Activated CD4-positive, alpha-beta memory T cell treated with anti-CD3 and anti-CD28 coated beads, Interleukin-2, amount 10 ng/mL, durations not matched to agents 7 days and 5 days (primary cell): ENCODE measurements at regions of chr12 and their contacts with region 1.

Region 1: GRCh38 chr12:111812881-111813741 is 28.9 kb upstream of the MAPKAPK5 start:
- DNase-seq: peak; percentile 70
- H3K4me3 Mint-ChIP-seq: no peak overlapping the region
- H3K27ac Mint-ChIP-seq: no peak overlapping the region
- H3K4me1 Mint-ChIP-seq: peaks cover 11% of the 10 kb centered on the region
- H3K27me3 Mint-ChIP-seq: peaks cover 9% of the 10 kb centered on the region

Region 2: DNA sequence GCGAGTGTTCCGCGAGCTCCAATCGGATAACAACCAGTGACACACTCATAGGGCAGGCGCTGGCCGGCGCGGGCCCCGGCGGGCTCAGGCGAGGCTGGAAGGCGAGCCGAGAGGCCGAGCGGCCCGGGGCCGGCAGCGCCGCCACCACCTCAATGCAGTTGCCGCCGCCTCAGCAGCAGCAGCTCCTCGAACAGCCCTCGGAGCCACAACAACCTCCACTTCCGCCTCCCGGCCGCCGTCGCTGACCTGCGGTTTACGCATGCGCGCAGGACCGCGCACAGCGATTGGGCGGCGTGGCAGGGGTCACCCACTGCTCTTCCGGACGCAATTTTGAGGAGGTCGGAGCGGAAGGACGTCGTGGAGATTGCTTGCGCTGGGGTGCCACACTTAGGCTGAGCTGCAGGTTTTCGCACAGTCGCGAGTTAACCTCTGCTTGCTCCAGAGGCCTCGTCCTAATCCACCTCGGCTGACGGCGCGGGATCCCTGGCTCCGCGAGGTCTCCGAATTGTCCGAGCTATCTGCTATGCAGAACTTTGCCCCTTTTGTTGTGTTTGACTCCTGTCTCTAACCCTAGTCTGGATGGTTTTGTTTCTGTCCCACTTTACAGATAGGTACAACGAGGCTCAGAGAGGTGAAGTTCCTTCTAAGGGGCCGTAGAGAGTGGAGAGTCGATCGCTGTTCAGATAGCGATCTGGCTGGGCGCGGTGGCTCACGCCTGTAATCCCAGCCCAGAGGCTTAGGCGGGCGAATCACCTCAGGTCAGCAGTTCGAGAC is 127.2 kb before region 1 on chr12 and contains the starts of genes ACAD10 and BRAP:
- CTCF ChIA-PET with region 1: interaction called, 15 read pairs
- POLR2A ChIA-PET with region 1: interaction called, 6 read pairs
- DNase-seq: peak; percentile 95
- H3K4me3 Mint-ChIP-seq: peak within 1 kb of the TSS; percentile 99
- H3K27ac Mint-ChIP-seq: peak within 1 kb of the TSS; percentile 93
- H3K4me1 Mint-ChIP-seq: peaks cover 36% of the 10 kb centered on the region
- H3K27me3 Mint-ChIP-seq: no peaks in the 10 kb centered on the region
- total RNA-seq, gene ACAD10: 25.3 to 28.5 TPM
- total RNA-seq, gene BRAP: 18.1 to 19.4 TPM

Region 3: GRCh38 chr12:111692575-111693210 is 120.4 kb before region 1 on chr12:
- CTCF ChIA-PET with region 1: interaction called, 11 read pairs
- POLR2A ChIA-PET with region 1: no interaction called
- DNase-seq: no peak
- H3K4me3 Mint-ChIP-seq: no peak overlapping the region
- H3K27ac Mint-ChIP-seq: no peak overlapping the region
- H3K4me1 Mint-ChIP-seq: peaks cover 6% of the 10 kb centered on the region
- H3K27me3 Mint-ChIP-seq: no peaks in the 10 kb centered on the region

Region 4: GRCh38 chr12:111753144-111753881 is 59.8 kb before region 1 on chr12:
- CTCF ChIA-PET with region 1: interaction called, 18 read pairs
- POLR2A ChIA-PET with region 1: no interaction called
- DNase-seq: no peak
- H3K4me3 Mint-ChIP-seq: no peak overlapping the region
- H3K27ac Mint-ChIP-seq: no peak overlapping the region
- H3K4me1 Mint-ChIP-seq: peaks cover 12% of the 10 kb centered on the region
- H3K27me3 Mint-ChIP-seq: no peaks in the 10 kb centered on the region

Region 5: GRCh38 chr12:111777345-111778045 is 35.6 kb before region 1 on chr12:
- CTCF ChIA-PET with region 1: no interaction called
- POLR2A ChIA-PET with region 1: no interaction called
- DNase-seq: no peak
- H3K4me3 Mint-ChIP-seq: no peak overlapping the region
- H3K27ac Mint-ChIP-seq: no peak overlapping the region
- H3K4me1 Mint-ChIP-seq: peaks cover 3% of the 10 kb centered on the region
- H3K27me3 Mint-ChIP-seq: peaks cover 7% of the 10 kb centered on the region

Region 6: GRCh38 chr12:111841750-111842555 is 28.8 kb after region 1 on chr12 and contains the start of gene MAPKAPK5:
- CTCF ChIA-PET with region 1: interaction called, 5 read pairs
- POLR2A ChIA-PET with region 1: interaction called, 13 read pairs
- DNase-seq: peak; percentile 96
- H3K4me3 Mint-ChIP-seq: peak within 1 kb of the TSS; percentile 98
- H3K27ac Mint-ChIP-seq: peak within 1 kb of the TSS; percentile 92
- H3K4me1 Mint-ChIP-seq: peaks cover 51% of the 10 kb centered on the region
- H3K27me3 Mint-ChIP-seq: no peaks in the 10 kb centered on the region
- total RNA-seq, gene MAPKAPK5: 40.4 to 44.8 TPM